Activated CD8-positive, alpha-beta T cell treated with anti-CD3 and anti-CD28 coated beads for 36 hours (primary cell): ENCODE measurements at regions of chr17 and their contacts with region 1.

Region 1: GRCh38 chr17:7280519-7281429 is 744 bp upstream of the SLC2A4 start:
- DNase-seq: peak; percentile 92
- ATAC-seq: peak; percentile 85
- H3K4me3 Mint-ChIP-seq: peak overlapping the region; percentile 73
- H3K27ac Mint-ChIP-seq: peak overlapping the region; percentile 57
- H3K4me1 Mint-ChIP-seq: peaks cover 19% of the 10 kb centered on the region
- H3K27me3 Mint-ChIP-seq: peaks cover 16% of the 10 kb centered on the region
- CTCF ChIP-seq: peak; percentile 79

Region 2: GRCh38 chr17:7266784-7267183 is 14.0 kb before region 1 on chr17:
- CTCF ChIA-PET with region 1: interaction called, 10 read pairs
- POLR2A ChIA-PET with region 1: no interaction called
- intact Hi-C with region 1: no loop called
- DNase-seq: no peak
- ATAC-seq: no peak
- H3K4me3 Mint-ChIP-seq: no peak overlapping the region
- H3K27ac Mint-ChIP-seq: no peak overlapping the region
- H3K4me1 Mint-ChIP-seq: peaks cover 17% of the 10 kb centered on the region
- H3K27me3 Mint-ChIP-seq: peaks cover 17% of the 10 kb centered on the region
- CTCF ChIP-seq: no peak

Region 3: DNA sequence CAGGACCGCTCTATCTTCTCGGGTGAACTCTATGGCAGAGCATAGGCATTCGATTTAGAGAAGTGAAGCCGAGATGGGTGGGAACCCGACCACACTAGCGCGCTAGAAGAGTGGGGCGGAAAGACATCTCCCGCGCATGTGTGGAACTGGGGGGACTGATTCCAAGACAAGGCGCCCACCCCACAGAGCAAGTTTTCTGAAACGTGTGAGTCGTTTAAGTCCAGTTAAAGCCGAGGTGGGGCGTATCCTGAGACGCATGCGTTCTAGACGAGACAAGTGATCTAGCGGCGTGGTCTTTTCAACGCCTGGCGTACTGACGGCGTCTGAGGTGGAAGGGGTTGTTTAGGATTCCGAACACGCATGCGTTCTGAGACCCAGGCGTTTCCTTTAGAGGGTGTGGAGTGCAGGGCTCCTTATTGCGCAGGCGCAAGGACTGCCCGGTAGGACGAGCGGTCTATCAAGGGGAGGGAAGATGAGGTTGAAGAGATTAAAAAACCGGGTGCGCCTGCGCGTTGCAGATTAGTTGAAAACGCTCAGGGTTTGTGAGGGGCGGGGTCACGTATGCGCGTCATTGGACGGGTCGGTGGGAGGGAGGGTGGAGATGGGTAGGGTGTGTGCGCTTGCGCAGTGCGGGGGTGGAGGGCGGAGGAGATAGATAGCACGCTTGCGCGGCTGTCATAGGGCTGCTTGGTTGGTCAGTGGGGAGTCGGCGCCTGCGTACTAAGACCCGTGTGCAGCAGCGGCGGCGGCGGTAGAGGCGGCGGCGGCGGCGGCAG is 26.3 kb after region 1 on chr17 and contains the start of gene EIF5A:
- CTCF ChIA-PET with region 1: interaction called, 3 read pairs
- POLR2A ChIA-PET with region 1: interaction called, 15 read pairs
- intact Hi-C with region 1: no loop called
- DNase-seq: peak; percentile 100
- ATAC-seq: peak; percentile 84
- H3K4me3 Mint-ChIP-seq: peak within 1 kb of the TSS; percentile 94
- H3K27ac Mint-ChIP-seq: peak within 1 kb of the TSS; percentile 98
- H3K4me1 Mint-ChIP-seq: peaks cover 38% of the 10 kb centered on the region
- H3K27me3 Mint-ChIP-seq: no peaks in the 10 kb centered on the region
- CTCF ChIP-seq: no peak
- total RNA-seq, gene EIF5A: 1,064 TPM